PC-3 (cell line): ENCODE measurements at regions of chr5 and their contacts with region 1.

Region 1: GRCh38 chr5:124773315-124774311 is 27.2 kb upstream of the ZNF608 start:
- DNase-seq: no peak
- ATAC-seq: no peak
- H3K4me3 ChIP-seq: no peak overlapping the region
- H3K27ac ChIP-seq: no peak overlapping the region
- H3K4me1 ChIP-seq: no peaks in the 10 kb centered on the region
- H3K27me3 ChIP-seq: no peaks in the 10 kb centered on the region
- CTCF ChIP-seq: no peak

Region 2: GRCh38 chr5:124806373-124807077 is 32.9 kb after region 1 on chr5:
- CTCF ChIA-PET with region 1: interaction called, 11 read pairs
- POLR2A ChIA-PET with region 1: no interaction called
- intact Hi-C with region 1: no loop called
- DNase-seq: peak; percentile 20
- ATAC-seq: peak; percentile 51; the same call in 1 of the 2 replicates
- H3K4me3 ChIP-seq: no peak overlapping the region
- H3K27ac ChIP-seq: no peak overlapping the region
- H3K4me1 ChIP-seq: no peaks in the 10 kb centered on the region
- H3K27me3 ChIP-seq: no peaks in the 10 kb centered on the region
- CTCF ChIP-seq: no peak